ENCODE measurements at regions of chr1 and their contacts with region 1.

Region 1: DNA sequence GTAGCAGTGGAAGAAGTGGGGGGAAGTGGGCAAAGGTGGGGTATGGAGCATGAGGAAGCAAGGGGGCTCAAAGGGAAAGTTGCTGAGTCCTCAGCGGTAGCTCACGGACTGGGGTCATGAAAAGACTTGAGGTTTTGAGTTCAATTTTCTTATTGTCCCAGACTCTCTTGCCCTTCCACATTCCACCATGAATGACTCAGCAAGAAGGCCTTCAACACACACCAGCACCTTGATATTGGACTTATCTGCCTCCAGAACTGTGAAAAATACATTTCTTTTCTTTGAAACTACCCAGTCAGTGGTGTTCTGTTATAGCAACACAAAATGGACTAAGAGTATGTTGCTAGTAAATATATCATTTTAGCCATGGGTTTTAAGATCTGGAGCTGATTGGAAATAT is 17.3 kb upstream of the RHBDL2 start:
- DNase-seq: peak; percentile 76
- H3K4me3 ChIP-seq: no peak overlapping the region
- H3K27ac ChIP-seq: peak overlapping the region; percentile 64
- H3K4me1 ChIP-seq: peaks cover 46% of the 10 kb centered on the region
- H3K27me3 ChIP-seq: no peaks in the 10 kb centered on the region
- CTCF ChIP-seq: no peak

Region 2: DNA sequence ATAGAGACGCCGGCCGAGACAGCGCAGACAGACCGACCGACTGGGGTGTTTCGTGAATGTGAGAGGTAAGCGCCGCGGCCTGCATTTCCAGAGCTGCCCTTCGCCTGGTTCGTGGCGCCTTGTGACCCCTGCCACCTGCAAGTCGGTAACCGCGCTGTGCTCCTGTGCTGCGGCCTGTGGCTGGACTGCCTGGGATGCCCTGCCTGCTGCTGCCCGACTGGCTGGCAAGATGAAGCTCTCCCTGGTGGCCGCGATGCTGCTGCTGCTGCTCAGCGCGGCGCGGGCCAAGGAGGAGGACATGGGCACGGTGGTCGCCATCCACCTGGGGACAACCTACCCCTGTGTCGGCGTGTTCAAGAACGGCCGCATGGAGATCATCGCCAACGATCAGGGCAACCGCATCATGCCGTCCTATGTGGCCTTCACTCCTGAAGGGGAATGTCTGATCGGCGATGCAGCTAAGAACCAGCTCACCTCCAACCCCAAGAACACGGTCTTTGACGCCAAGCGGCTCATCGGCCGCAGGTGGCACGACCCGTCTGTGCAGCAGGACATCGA is 250.2 kb before region 1 on chr1:
- CTCF ChIA-PET with region 1: no interaction called
- dilution Hi-C with region 1: no loop called
- in situ Hi-C with region 1: no loop called
- intact Hi-C with region 1: no loop called
- DNase-seq: no peak
- H3K4me3 ChIP-seq: no peak overlapping the region
- H3K27ac ChIP-seq: no peak overlapping the region
- H3K4me1 ChIP-seq: no peaks in the 10 kb centered on the region
- H3K27me3 ChIP-seq: no peaks in the 10 kb centered on the region
- CTCF ChIP-seq: no peak

Region 3: GRCh38 chr1:38973659-38974424 is 14.9 kb after region 1 on chr1:
- CTCF ChIA-PET with region 1: no interaction called
- dilution Hi-C with region 1: no loop called
- in situ Hi-C with region 1: no loop called
- intact Hi-C with region 1: no loop called
- DNase-seq: no peak
- H3K4me3 ChIP-seq: no peak overlapping the region
- H3K27ac ChIP-seq: no peak overlapping the region
- H3K4me1 ChIP-seq: no peaks in the 10 kb centered on the region
- H3K27me3 ChIP-seq: no peaks in the 10 kb centered on the region
- CTCF ChIP-seq: no peak

Region 4: DNA sequence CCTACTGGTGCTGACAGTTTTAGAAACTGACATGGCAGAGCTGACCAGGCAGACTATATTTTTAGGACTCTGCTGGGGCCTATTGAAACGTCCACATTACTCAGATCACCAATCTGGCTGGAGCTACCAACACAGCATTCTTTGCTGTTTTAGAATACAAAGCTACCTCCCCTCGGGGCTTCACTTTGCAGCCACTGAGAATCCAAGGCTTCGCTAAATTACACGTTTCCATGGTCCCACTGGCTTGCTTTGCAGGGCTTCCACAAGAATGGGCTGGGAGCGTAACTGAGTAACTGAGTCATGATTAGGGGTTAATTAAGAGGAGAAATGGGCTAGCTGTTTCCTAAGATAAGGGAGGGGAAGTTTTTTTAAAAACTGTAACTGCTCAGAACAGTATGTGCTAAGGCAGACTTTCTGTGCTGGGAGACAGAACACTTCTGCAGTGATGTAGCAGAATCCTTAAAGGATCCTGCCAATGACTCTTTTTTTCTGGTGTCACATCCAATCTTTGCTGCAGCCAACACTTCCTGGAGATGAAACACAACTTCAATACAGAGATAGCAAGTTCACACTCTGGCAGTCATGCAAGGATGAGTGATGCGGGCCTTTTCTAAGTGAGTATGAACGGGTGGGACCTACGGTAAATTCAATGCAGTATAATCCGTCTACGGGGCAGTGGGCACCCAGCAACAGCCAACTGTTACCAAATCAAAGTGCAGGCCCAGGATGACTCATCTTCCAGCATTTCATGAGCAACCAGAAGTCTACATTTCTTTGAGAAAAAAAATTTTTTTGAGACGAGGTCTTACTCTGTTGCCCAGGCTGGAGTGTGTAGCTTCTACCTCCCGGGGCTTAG is 88.6 kb after region 1 on chr1:
- CTCF ChIA-PET with region 1: no interaction called
- dilution Hi-C with region 1: loop called (anchors 5 kb)
- in situ Hi-C with region 1: no loop called
- intact Hi-C with region 1: no loop called
- DNase-seq: peak; percentile 12
- H3K4me3 ChIP-seq: no peak overlapping the region
- H3K27ac ChIP-seq: no peak overlapping the region
- H3K4me1 ChIP-seq: no peaks in the 10 kb centered on the region
- H3K27me3 ChIP-seq: no peaks in the 10 kb centered on the region
- CTCF ChIP-seq: no peak

Region 5: GRCh38 chr1:39091845-39092645 is 133.1 kb after region 1 on chr1:
- CTCF ChIA-PET with region 1: no interaction called
- dilution Hi-C with region 1: no loop called
- in situ Hi-C with region 1: no loop called
- intact Hi-C with region 1: no loop called
- DNase-seq: peak; percentile 54
- H3K4me3 ChIP-seq: no peak overlapping the region
- H3K27ac ChIP-seq: no peak overlapping the region
- H3K4me1 ChIP-seq: peaks cover 14% of the 10 kb centered on the region
- H3K27me3 ChIP-seq: no peaks in the 10 kb centered on the region
- CTCF ChIP-seq: peak; percentile 79 to 82

Region 6: DNA sequence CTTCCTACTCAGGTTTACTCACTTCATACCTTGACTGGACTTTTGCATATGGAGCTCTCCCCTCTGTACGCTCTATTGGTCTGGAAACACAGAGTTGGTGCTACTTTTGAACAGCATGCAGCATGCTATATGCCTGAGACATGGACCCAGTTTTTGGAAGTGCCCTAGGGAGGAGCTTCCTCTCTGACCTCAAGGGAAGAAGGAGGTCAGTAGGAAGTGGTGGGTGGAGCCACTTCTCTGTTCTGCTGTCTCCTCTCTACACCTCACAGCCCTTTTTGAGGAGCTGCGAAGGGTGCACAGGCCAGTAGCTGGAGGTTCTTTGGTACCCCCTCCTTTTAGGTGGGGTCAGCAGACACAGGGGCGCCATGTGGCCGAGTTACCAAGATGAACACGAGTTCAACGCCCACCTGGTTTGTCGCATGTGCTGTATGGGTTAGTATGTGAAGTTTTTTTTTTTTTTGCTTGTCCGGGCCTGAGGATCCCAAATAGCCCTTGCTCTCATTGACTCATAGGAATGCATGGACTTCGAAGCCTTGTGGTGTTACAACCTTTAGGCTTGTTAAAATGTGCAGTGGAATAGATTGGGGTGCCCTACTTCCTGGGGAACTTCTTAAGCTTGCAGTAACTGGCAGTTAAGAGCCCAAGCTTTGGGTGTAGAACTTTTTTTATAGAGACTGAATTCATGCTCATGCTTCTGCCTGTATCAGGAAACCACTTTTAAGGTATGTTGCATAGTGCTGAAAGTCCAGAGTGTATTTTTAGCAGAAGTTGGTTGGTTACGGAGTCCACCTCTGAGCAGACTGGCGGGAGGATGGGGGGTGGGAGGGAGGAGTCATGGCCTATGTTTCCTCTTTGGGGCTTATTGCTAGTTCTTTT is 256.3 kb after region 1 on chr1:
- CTCF ChIA-PET with region 1: no interaction called
- dilution Hi-C with region 1: no loop called
- in situ Hi-C with region 1: no loop called
- intact Hi-C with region 1: no loop called
- DNase-seq: peak; percentile 69
- H3K4me3 ChIP-seq: peak overlapping the region in 1 of 3 experiments; percentile 5
- H3K27ac ChIP-seq: peak overlapping the region; percentile 68
- H3K4me1 ChIP-seq: peaks cover 52% of the 10 kb centered on the region
- H3K27me3 ChIP-seq: no peaks in the 10 kb centered on the region
- CTCF ChIP-seq: no peak

Measured in mammary epithelial cell (primary cell).